Activated T-helper 1 cell treated with anti-CD3 and anti-CD28 coated beads, Interleukin-12 subunit alpha, Interleukin-12 subunit beta, Interleukin-2, Interleukin-4 antibody, amounts not matched to agents 30 ng/mL and 10 ng/mL and 1 ng/mL, durations not matched to agents 14 hours and 24 hours and 36 hours (primary cell): ENCODE measurements at regions of chr5 and their contacts with region 1.

Region 1: DNA sequence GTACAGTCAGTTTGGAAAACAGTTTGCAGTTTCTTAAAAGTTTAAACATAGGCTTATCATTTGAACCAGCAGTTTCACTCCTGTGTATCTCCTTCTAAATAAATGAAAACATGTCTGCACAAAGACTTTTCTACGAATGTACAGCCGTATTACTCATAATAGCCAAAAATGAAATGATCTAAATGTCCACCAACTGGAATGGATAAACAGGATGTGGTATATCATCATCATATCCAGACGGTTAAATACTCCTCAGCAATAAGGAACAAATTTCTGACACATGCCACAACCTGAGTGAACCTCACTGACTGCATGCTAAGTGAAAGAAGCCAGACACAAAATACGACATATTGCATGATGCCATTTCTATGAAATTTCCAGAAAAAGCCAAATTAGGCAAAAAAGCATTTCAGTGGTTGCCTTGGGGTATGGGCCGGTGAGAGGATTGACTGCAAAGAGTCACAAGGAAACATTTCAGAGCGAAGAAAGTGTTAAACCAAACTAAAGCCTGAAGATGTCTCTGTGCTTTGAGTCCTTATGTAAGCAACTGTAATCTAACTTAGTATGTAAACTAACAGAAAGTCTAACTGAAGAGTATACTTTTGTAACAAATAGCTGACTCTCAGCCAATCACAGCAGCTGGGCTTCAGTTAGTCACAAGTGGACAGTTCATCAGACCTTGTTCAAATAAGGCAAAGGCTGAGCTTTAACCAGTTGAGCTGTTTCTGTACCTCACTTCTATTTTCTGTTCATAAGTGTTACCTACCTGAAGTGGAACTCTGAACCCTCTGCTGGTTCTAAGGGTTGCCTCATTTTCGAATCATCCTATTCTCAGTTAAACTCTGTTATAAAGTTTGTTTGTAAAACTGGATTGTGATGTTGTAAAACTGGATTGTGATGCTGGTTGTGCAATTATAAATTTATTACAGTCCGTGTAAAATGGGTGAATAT is 65.2 kb downstream of the TRIO start:
- DNase-seq: no peak
- H3K4me3 Mint-ChIP-seq: no peak overlapping the region
- H3K27ac Mint-ChIP-seq: peak overlapping the region; percentile 55
- H3K4me1 Mint-ChIP-seq: peaks cover 54% of the 10 kb centered on the region
- H3K27me3 Mint-ChIP-seq: peaks cover 6% of the 10 kb centered on the region

Region 2: GRCh38 chr5:14264604-14265316 is 56.4 kb after region 1 on chr5:
- intact Hi-C with region 1: loop called (anchors 5 kb)
- DNase-seq: peak; percentile 70
- H3K4me3 Mint-ChIP-seq: peak overlapping the region; percentile 66
- H3K27ac Mint-ChIP-seq: no peak overlapping the region
- H3K4me1 Mint-ChIP-seq: peaks cover 19% of the 10 kb centered on the region
- H3K27me3 Mint-ChIP-seq: peaks cover 13% of the 10 kb centered on the region